Calu3 (cell line): ENCODE measurements at regions of chr9 and their contacts with region 1.

Region 1: DNA sequence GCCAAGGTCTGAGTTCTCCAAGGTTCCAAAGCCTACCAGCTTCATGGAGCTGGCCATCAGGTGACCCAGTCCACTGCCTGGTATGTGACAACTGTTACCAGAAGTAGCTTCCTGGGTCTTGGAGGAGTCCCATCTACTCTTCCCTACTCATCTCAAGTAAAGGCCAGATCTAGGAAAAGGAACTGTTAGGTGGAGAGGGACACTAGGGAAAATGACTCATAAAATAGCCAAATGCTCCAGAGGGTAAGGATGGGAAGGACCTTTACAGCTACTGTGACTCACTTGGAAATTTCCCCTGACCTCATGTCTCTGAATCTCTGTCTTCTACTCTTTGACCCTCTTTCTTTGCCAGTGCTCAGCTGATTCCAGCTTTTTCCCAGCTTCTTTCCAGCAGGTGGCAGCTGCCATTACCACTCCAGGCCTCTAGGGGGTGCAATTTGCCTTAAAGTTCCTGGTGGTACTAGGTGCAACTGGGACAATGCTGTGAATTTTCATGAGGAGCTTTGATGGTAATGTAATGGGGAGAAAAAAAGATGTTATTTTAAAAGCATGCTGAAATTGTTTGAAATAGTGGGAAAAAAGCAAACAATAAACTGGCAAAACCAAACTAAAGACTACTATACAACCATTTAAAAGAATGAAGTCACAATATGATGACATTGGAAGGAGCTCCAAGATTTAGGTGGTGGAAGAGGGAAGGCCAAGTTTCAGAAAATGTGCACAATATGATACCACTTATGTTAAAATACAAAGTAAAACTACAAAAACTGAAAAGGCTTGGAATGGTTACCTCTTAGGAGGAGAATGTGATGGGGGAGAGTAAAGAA is 27.1 kb upstream of the MYORG start:
- DNase-seq: peak; percentile 70
- H3K4me3 Mint-ChIP-seq: no peak overlapping the region
- H3K27ac Mint-ChIP-seq: no peak overlapping the region
- H3K4me1 Mint-ChIP-seq: no peaks in the 10 kb centered on the region
- H3K27me3 Mint-ChIP-seq: no peaks in the 10 kb centered on the region
- CTCF ChIP-seq: peak; percentile 73

Region 2: DNA sequence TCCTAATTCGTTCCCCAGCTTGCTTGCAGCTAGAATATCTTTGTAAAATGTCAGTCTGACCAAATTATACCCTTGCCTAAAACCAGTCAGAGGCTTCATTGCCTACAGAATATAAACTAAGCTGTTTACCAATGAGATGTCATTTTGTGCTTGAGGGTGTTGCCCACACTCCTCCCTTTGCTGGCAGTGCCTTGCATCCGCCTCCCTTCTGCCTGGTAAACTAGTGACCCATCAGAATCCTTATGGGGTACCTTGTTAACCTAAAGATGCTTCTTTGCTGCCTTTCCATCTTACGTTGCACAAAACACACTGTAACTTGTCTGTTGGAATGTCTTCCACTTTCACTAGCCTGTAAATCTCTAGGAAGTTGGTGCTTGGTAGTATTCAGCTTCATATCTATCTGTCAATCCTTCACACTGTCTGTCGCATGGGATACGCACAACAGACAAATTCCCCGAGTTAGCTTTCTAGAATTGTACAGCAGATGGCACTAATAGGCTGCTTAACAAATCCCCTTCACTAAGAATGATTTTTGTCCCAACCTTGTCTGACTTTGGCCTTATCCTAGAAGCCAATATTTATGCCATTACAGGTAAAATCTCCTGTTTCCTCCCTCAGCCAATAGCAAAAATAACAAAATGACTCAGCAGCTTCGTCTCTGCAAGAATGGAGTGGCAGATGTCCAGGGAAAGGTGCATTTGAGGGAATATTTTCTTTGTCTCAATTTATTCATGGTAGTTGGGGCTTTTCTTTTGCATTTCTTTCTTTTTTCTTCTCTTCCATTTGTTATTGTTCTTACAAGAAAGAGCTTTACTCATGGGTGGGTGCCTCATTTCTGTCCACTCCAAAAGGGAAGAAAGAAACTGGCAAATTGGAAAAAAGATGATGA is 71.4 kb before region 1 on chr9:
- CTCF ChIA-PET with region 1: no interaction called
- intact Hi-C with region 1: no loop called
- DNase-seq: no peak
- H3K4me3 Mint-ChIP-seq: no peak overlapping the region
- H3K27ac Mint-ChIP-seq: no peak overlapping the region
- H3K4me1 Mint-ChIP-seq: peaks cover 14% of the 10 kb centered on the region
- H3K27me3 Mint-ChIP-seq: no peaks in the 10 kb centered on the region
- CTCF ChIP-seq: no peak

Region 3: GRCh38 chr9:34546834-34547827 is 143.4 kb after region 1 on chr9:
- CTCF ChIA-PET with region 1: interaction called, 15 read pairs
- intact Hi-C with region 1: loop called (anchors 5 kb)
- DNase-seq: peak; percentile 70
- H3K4me3 Mint-ChIP-seq: no peak overlapping the region
- H3K27ac Mint-ChIP-seq: no peak overlapping the region
- H3K4me1 Mint-ChIP-seq: no peaks in the 10 kb centered on the region
- H3K27me3 Mint-ChIP-seq: peaks cover 48% of the 10 kb centered on the region
- CTCF ChIP-seq: peak; percentile 61

Region 4: DNA sequence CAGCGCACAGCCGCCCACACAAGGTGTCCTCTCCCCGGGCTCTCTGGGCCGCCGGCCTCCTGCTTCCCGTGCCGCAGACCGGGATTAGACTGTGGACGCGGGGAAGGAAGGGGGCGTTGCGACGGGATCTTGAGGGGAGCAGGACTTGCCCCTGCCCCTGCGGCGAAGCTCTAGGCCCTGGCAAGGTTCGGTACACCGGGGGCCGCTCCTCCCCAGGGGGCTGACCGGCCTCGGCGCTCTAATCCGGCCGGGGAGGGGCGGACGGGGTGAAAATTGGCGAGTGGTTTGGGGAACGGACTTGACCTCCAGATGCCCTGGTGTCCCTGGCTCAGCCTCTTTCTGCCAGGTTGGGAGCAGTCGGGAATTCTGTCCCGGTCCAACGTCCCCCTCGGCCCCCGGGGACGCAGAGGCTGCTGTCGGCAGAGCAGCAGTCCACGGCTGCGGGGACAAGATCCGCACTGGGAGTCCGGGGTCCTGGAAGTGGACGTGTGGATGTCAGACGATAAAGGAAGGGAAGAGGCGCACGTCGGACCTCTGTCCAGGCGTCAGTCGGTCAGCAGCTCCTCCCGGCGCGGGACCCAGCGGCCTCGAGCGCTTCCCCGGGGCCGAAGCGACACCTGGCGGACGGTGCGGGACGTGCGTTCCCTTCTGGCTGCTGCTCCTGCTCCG is 187.6 kb after region 1 on chr9:
- CTCF ChIA-PET with region 1: interaction called, 10 read pairs
- intact Hi-C with region 1: loop called (anchors 10 kb)
- DNase-seq: peak; percentile 88
- H3K4me3 Mint-ChIP-seq: peak overlapping the region; percentile 65
- H3K27ac Mint-ChIP-seq: no peak overlapping the region
- H3K4me1 Mint-ChIP-seq: no peaks in the 10 kb centered on the region
- H3K27me3 Mint-ChIP-seq: peaks cover 85% of the 10 kb centered on the region
- CTCF ChIP-seq: peak; percentile 79

Region 5: GRCh38 chr9:34927061-34927460 is 523.3 kb after region 1 on chr9:
- CTCF ChIA-PET with region 1: no interaction called
- intact Hi-C with region 1: no loop called
- DNase-seq: no peak
- H3K4me3 Mint-ChIP-seq: no peak overlapping the region
- H3K27ac Mint-ChIP-seq: no peak overlapping the region
- H3K4me1 Mint-ChIP-seq: no peaks in the 10 kb centered on the region
- H3K27me3 Mint-ChIP-seq: peaks cover 86% of the 10 kb centered on the region
- CTCF ChIP-seq: no peak